Tibial artery (tissue), 4 donors: ENCODE measurements at regions of chr1 and their contacts with region 1.

Region 1: DNA sequence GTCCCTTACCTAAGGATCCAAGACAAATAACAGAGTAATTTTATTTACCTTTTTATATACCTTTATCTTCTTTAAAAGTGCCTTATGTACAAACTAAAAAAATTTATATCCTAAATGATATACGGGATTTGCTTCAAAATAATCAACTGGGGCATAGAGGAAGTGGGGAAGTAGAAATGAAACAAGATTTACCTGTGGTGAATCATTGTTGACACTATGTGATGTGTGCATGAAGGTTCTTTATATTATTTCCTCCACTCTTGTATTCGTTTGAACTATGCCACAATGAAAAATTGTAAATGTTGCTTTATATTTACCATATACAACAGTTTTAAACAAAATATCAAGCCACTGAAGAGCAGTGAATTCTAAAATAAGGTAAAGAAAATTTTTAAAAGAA is 13.0 kb downstream of the RGS7 start:
- DNase-seq: no peak
- H3K4me3 ChIP-seq: no peak overlapping the region
- H3K27ac ChIP-seq: no peak overlapping the region
- H3K4me1 ChIP-seq: no peaks in the 10 kb centered on the region
- H3K27me3 ChIP-seq: no peaks in the 10 kb centered on the region
- CTCF ChIP-seq: no peak

Region 2: DNA sequence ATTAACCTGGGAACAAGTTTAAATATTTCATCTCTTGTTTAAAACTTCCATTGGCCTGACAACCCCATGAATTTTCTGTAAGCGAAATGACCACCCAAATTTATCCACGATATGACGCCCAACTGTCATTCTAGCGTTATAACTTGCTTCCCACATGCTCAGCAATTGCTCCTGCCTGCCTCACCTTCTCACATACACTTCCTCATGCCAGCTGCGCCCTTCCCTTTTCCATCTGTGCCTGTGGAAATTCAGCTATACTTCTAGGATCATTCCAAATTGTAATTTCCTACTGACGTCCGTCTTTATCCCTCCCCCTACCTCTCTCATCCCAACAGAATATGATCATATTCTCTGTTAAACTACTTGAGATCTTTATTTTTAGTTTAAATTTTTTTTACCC is 234.9 kb before region 1 on chr1:
- intact Hi-C with region 1: no loop called
- DNase-seq: no peak
- H3K4me3 ChIP-seq: no peak overlapping the region
- H3K27ac ChIP-seq: no peak overlapping the region
- H3K4me1 ChIP-seq: no peaks in the 10 kb centered on the region
- H3K27me3 ChIP-seq: no peaks in the 10 kb centered on the region
- CTCF ChIP-seq: no peak

Region 3: DNA sequence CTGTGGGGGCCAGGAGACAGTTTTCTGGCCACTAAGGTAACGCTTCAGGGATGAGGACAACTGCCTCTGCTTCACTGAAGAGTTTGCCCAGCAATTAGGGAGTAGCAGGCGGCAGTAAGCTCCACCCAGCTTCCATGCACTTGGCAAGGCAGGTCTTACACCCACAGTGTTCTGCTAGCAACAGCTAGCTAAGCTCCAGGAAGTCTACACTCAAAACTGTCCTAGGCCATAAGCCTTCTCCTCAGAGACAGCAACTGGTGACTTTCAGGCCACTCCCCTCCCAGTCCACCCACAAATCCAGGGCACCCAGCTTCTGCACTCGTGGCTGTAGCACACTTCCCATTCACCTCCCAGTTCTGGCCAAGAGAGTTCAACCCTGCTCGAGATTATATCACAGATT is 235.5 kb after region 1 on chr1:
- intact Hi-C with region 1: loop called (anchors 10 kb)
- DNase-seq: no peak
- H3K4me3 ChIP-seq: no peak overlapping the region
- H3K27ac ChIP-seq: no peak overlapping the region
- H3K4me1 ChIP-seq: no peaks in the 10 kb centered on the region
- H3K27me3 ChIP-seq: no peaks in the 10 kb centered on the region
- CTCF ChIP-seq: no peak